ENCODE measurements at regions of chr5 and their contacts with region 1.

Region 1: GRCh38 chr5:138226910-138227309 is 13.8 kb upstream of the CDC23 start:
- DNase-seq: no peak
- ATAC-seq: no peak
- H3K4me3 ChIP-seq: no peak overlapping the region
- H3K27ac ChIP-seq: no peak overlapping the region
- H3K4me1 ChIP-seq: peaks cover 0 to 21% (median 7%) of the 10 kb centered on the region in 12 donors
- H3K27me3 ChIP-seq: no peaks in the 10 kb centered on the region
- CTCF ChIP-seq: no peak
- POLR2A ChIP-seq: no peak

Region 2: GRCh38 chr5:138096363-138096762 is 130.5 kb before region 1 on chr5:
- intact Hi-C with region 1: no loop called
- DNase-seq: no peak
- ATAC-seq: no peak
- H3K4me3 ChIP-seq: no peak overlapping the region
- H3K27ac ChIP-seq: no peak overlapping the region
- H3K4me1 ChIP-seq: no peaks in the 10 kb centered on the region
- H3K27me3 ChIP-seq: peaks cover 0 to 12% (median 0%) of the 10 kb centered on the region in 9 donors
- CTCF ChIP-seq: no peak
- POLR2A ChIP-seq: no peak

Region 3: DNA sequence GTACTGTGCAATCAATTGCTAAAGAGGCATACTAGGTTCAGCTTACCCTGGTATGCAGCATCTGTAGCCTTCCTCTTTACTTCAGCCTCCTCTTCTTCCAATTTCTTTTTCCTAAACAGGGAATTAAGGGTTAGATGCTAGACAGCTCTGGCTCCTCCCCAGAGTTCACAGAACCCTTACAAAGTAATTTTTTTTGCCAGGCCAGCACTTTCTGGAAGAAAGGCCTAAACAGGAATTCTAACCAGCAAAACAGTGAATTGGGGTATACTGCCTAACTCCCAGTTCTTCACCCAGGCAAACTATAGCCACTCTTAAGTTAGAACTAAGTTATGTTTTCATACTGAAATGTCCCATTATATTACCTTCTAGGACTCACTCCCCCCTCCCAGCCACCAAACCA is 56.6 kb before region 1 on chr5:
- intact Hi-C with region 1: no loop called
- DNase-seq: no peak
- ATAC-seq: no peak
- H3K4me3 ChIP-seq: no peak overlapping the region
- H3K27ac ChIP-seq: no peak overlapping the region
- H3K4me1 ChIP-seq: no peaks in the 10 kb centered on the region
- H3K27me3 ChIP-seq: no peaks in the 10 kb centered on the region
- CTCF ChIP-seq: no peak
- POLR2A ChIP-seq: no peak

Region 4: GRCh38 chr5:138282920-138283742 is 56.2 kb after region 1 on chr5:
- intact Hi-C with region 1: loop called (anchors 1 to 5 kb)
- DNase-seq: peak in 4 of 5 donors; percentile 25 to 43 (median 35)
- ATAC-seq: peak; percentile 72 to 91 (median 88)
- H3K4me3 ChIP-seq: no peak overlapping the region
- H3K27ac ChIP-seq: no peak overlapping the region
- H3K4me1 ChIP-seq: peaks cover 0 to 7% (median 0%) of the 10 kb centered on the region in 12 donors
- H3K27me3 ChIP-seq: no peaks in the 10 kb centered on the region
- CTCF ChIP-seq: peak in 11 of 12 donors; percentile 8 to 60 (median 54)
- POLR2A ChIP-seq: no peak

Region 5: DNA sequence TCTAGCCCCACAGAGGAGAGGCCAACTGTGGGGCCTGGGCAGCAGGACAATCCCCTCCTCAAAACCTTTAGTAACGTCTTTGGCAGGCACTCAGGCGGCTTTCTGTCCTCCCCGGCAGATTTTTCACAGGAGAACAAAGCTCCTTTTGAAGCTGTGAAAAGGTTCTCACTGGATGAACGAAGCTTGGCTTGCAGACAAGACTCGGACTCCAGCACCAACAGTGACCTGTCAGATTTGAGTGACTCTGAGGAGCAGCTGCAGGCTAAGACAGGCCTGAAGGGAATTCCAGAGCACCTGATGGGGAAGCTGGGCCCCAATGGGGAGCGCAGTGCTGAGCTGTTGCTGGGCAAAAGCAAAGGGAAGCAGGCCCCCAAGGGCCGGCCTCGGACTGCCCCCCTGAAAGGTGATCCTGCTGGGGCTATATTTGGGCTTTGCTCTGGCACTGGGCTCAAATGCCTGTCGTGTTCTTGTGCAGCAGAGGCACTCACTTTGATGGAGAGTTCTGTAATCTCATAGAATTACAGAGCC is 165.0 kb after region 1 on chr5:
- intact Hi-C with region 1: loop called in 1 of 10 experiments (anchors 10 kb)
- DNase-seq: peak; percentile 64 to 79 (median 65)
- ATAC-seq: peak; percentile 95 to 98 (median 96)
- H3K4me3 ChIP-seq: peak overlapping the region in 2 of 12 donors; percentile 18 to 26
- H3K27ac ChIP-seq: peak overlapping the region; percentile 52 to 93 (median 74)
- H3K4me1 ChIP-seq: peaks cover 0 to 33% (median 6%) of the 10 kb centered on the region in 12 donors
- H3K27me3 ChIP-seq: no peaks in the 10 kb centered on the region
- CTCF ChIP-seq: no peak
- POLR2A ChIP-seq: no peak

Region 6: DNA sequence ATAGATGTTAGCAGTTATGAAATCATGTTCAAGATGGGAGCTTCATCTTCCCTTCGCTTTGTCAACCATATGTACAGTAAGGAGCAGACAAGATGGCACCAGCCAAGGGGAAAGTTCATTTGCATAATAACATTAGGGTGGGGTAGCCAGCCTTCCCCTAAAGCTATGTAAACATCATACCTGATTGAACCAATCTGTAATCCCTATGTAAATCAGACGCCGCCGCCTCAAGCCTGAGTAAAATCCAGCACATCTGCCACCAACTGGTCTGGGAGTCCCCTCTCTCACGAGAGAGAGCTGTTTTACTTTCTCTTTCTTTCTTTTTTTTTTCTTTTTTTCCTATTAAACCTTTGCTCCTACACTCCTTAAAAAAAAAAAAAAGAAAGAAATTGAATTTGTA is 181.1 kb after region 1 on chr5:
- intact Hi-C with region 1: loop called in 2 of 10 experiments (anchors 5 to 10 kb)
- DNase-seq: no peak
- ATAC-seq: no peak
- H3K4me3 ChIP-seq: no peak overlapping the region
- H3K27ac ChIP-seq: no peak overlapping the region
- H3K4me1 ChIP-seq: no peaks in the 10 kb centered on the region
- H3K27me3 ChIP-seq: no peaks in the 10 kb centered on the region
- CTCF ChIP-seq: no peak
- POLR2A ChIP-seq: no peak

Region 7: DNA sequence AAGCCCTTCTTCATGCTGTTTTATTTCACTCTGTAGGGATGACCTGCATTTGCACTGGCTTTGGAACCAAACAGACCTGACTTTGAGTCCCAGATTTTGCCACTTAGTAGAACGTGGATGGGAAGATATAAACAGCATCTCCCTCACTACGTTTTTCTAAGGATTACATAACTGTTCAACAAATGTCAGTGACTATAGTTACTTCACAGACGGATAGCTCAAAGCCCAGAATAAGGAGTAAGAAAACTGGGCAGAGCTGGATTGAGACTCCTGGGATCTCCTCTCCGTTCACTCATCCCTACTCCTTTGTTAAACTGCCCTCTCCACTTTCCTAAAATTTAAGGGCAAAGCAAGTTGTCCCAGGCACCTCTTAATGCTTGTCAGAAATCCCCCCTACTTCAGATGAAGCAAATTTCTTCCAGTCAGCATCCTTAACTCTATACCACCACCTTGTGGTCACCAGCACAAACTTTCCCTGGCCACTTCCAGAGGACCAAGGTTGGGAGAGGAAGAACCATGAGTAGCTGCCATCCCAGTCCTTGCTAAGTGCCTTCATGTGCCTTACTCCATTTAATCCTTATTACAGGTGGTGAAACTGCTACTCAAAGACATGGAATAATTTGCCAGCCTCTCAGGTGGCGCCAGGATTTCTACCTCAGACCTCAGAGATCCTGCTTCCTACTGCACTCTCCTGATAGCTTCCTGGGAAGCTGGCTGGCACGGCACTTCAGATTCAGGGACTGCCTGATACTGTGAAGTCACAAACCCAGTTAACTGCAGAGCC is 276.8 kb after region 1 on chr5:
- intact Hi-C with region 1: loop called in 1 of 10 experiments (anchors 10 kb)
- DNase-seq: peak in 2 of 5 donors; percentile 18 to 40
- ATAC-seq: peak; percentile 72 to 79 (median 76)
- H3K4me3 ChIP-seq: no peak overlapping the region
- H3K27ac ChIP-seq: peak overlapping the region in 4 of 12 donors; percentile 4 to 49 (median 28)
- H3K4me1 ChIP-seq: peaks cover 0 to 28% (median 8%) of the 10 kb centered on the region in 12 donors
- H3K27me3 ChIP-seq: no peaks in the 10 kb centered on the region
- CTCF ChIP-seq: peak; percentile 61 to 79 (median 72)
- POLR2A ChIP-seq: no peak